ENCODE measurements at regions of chr16 and their contacts with region 1.

Region 1: DNA sequence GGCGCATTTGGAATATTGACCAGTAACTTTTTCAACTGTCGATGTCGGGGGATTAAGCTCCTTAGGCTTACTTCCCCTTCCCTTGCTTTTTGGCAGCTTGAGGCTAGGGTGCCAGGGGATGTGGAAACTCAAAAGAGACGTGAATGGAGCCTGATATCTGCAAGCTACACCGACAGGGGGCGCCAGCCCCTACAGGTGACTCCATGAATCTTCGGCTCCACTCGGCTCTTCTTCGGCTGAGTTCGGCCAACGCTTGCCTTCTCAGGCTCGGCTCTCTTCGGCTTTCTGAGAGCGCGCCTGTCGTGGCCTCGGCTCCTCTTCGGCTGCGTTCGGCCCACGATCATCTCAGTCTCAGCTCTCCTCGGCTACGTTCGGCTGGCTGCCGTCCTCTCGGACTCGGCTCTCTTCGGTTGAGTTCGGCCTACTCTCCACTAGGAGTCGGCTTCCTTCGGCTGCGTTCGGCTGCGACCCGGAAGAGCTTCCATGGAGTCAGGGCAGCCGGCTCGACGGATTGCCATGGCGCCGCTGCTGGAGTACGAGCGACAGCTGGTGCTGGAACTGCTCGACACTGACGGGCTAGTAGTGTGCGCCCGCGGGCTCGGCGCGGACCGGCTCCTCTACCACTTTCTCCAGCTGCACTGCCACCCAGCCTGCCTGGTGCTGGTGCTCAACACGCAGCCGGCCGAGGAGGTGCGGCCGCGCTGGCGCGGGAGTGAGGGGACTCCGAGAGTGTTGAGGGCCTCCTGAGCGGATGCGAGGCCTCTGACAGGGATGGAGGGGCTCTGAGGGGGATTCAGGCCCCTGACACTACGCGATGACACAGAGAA is at the start of gene ERCC4:
- DNase-seq: peak; percentile 100
- ATAC-seq: peak; percentile 96
- H3K4me3 ChIP-seq: peak within 1 kb of the TSS; percentile 64 to 89 (median 79)
- H3K4me3 Mint-ChIP-seq: peak within 1 kb of the TSS; percentile 94
- H3K27ac ChIP-seq: peak within 1 kb of the TSS; percentile 12 to 85
- H3K27ac Mint-ChIP-seq: peak within 1 kb of the TSS; percentile 79
- H3K4me1 ChIP-seq: peaks cover 12 to 15% of the 10 kb centered on the region in 2 donors
- H3K4me1 Mint-ChIP-seq: peaks cover 24% of the 10 kb centered on the region
- H3K27me3 ChIP-seq: no peaks in the 10 kb centered on the region
- H3K27me3 Mint-ChIP-seq: no peaks in the 10 kb centered on the region
- CTCF ChIP-seq: peak; percentile 91
- total RNA-seq, gene ERCC4: 11.9 and 13.2 TPM in 2 replicates

Region 2: DNA sequence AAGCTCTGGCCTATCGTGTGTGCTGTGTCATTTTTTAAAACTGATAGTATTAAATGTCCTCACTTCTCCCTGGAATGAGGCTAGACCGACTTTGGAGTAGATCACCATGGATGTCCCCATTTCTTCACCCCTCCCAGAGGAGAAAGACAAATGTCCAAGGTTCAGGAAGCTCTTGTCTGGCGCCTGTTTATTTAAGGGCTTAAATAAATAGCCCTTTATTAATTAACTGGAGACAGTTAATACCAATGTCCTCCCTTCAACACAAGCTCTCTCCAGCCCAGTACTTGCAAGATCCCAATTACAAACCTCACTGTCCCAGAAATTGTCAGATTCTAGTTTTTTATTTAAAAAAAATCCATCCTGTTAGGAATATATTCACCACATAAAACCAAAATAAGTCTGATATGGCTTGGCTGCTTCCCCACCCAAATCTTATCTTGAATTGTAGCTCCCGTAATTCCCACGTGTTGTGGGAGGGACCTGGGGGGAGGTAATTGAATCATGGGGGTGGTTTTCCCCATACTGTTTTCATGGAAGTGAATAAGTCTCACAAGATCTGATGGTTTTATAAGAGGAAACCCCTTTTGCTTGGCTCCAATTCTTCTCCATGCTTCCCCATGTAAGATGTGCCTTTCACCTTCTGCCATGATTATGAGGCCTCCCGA is 674.1 kb before region 1 on chr16:
- CTCF ChIA-PET with region 1: no interaction called
- POLR2A ChIA-PET with region 1: no interaction called
- intact Hi-C with region 1: no loop called
- DNase-seq: no peak
- ATAC-seq: no peak
- H3K4me3 ChIP-seq: no peak overlapping the region
- H3K4me3 Mint-ChIP-seq: no peak overlapping the region
- H3K27ac ChIP-seq: no peak overlapping the region
- H3K27ac Mint-ChIP-seq: no peak overlapping the region
- H3K4me1 ChIP-seq: no peaks in the 10 kb centered on the region
- H3K4me1 Mint-ChIP-seq: no peaks in the 10 kb centered on the region
- H3K27me3 ChIP-seq: no peaks in the 10 kb centered on the region
- H3K27me3 Mint-ChIP-seq: no peaks in the 10 kb centered on the region
- CTCF ChIP-seq: no peak

Region 3: DNA sequence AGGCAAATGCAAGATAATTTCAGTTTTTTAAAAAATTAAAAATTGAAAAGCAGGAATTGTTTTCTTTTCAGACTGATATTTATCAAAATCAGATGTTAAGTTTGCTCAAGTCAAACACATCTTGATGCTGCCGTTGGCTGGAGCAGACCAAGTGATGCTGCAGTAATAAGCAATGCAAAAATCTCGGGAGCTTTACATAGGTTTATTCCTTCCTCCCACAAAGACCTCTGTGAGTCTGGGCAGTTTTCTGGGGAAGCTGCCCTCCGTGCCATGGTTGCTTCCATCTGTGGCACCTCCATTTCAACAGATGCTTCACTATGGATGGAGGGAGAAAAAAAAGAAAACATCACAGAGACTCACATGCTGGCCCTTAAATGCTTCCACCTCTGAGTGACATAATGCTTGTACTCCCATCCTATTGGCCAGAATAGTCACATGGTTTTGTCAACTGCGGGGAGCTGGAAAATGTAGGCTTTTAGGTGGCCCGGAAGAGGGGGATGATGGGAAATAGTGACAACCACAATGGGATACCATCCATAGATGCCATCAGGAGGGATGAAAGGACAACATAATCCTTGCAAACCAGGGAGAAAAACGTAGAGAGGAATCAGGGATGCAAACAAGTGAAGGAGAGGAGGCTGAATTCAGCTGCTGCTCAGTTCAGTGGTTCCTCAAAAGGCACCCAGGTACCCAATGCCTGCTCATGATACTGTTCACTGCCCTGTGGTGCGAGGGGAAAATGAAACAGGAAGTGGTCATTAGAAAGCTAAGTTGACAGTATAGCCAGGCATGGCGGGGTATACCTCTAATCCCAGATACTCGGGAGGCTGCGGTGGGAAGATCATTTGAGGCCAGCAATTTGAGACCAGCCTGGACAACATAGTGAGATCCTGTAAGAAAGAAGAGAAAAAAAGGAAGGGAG is 13.5 kb before region 1 on chr16:
- CTCF ChIA-PET with region 1: interaction called, 15 read pairs
- POLR2A ChIA-PET with region 1: no interaction called
- intact Hi-C with region 1: no loop called
- DNase-seq: peak; percentile 54
- ATAC-seq: peak; percentile 75
- H3K4me3 ChIP-seq: peak overlapping the region in 2 of 5 experiments; percentile 5 to 41
- H3K4me3 Mint-ChIP-seq: peak overlapping the region; percentile 40
- H3K27ac ChIP-seq: no peak overlapping the region
- H3K27ac Mint-ChIP-seq: peak overlapping the region; percentile 8
- H3K4me1 ChIP-seq: peaks cover 6 to 11% of the 10 kb centered on the region in 2 donors
- H3K4me1 Mint-ChIP-seq: peaks cover 7% of the 10 kb centered on the region
- H3K27me3 ChIP-seq: peaks cover 0 to 7% (median 4%) of the 10 kb centered on the region in 4 experiments
- H3K27me3 Mint-ChIP-seq: peaks cover 41% of the 10 kb centered on the region
- CTCF ChIP-seq: no peak

Region 4: DNA sequence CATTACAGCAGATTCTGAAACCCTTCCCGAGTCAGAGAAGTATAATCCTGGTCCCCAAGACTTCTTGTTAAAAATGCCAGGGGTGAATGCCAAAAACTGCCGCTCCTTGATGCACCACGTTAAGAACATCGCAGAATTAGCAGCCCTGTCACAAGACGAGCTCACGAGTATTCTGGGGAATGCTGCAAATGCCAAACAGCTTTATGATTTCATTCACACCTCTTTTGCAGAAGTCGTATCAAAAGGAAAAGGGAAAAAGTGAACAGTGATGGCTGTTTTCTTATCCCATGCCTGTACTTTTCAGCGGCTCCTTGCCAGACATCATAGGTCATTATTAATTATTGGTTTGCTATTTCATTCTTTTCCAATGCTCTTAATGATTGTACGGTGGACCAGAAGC is 28.2 kb after region 1 on chr16:
- CTCF ChIA-PET with region 1: no interaction called
- POLR2A ChIA-PET with region 1: no interaction called
- intact Hi-C with region 1: no loop called
- DNase-seq: no peak
- ATAC-seq: no peak
- H3K4me3 ChIP-seq: no peak overlapping the region
- H3K4me3 Mint-ChIP-seq: no peak overlapping the region
- H3K27ac ChIP-seq: no peak overlapping the region
- H3K27ac Mint-ChIP-seq: no peak overlapping the region
- H3K4me1 ChIP-seq: no peaks in the 10 kb centered on the region
- H3K4me1 Mint-ChIP-seq: no peaks in the 10 kb centered on the region
- H3K27me3 ChIP-seq: no peaks in the 10 kb centered on the region
- H3K27me3 Mint-ChIP-seq: no peaks in the 10 kb centered on the region
- CTCF ChIP-seq: no peak

Region 5: DNA sequence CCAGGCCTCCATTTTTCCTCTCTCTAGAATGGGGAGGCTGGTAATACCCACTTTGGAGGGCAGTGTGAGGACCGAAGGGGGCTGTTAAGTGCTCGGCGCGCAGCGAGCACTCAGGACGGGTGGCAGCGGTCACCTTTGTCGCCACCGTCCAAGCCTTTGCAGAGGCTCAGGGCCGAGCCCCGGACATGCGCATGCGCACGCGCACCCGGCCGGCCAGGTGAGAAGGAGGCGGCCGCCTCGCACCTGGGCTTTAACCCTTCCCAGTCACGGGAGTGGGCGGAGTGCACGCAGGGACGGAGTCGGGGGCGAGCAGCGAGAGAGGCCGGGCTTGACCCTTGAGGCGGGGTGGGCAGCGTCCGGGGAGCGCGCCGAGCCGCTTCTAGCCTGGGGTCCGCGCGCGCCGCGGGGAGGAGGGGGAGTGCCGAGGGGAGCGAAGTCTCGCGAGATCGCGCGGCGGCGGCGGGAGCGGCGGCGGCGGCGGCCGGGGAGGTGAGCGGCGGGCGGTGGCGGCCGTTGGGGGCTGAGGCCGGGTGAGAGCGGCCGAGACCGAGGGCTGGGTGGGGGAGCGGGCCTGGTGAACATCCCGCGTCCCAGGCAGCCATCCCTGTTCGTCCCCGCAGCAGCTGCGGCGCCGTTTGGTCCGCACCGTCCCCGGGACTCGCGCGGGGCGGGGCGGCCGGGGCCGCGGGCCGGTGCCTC is 151.1 kb after region 1 on chr16 and contains the start of gene MRTFB:
- CTCF ChIA-PET with region 1: interaction called, 6 read pairs
- POLR2A ChIA-PET with region 1: no interaction called
- intact Hi-C with region 1: loop called (anchors 1 kb)
- DNase-seq: peak; percentile 92
- ATAC-seq: peak; percentile 87
- H3K4me3 ChIP-seq: peak within 1 kb of the TSS; percentile 6 to 76 (median 67)
- H3K4me3 Mint-ChIP-seq: peak within 1 kb of the TSS; percentile 94
- H3K27ac ChIP-seq: peak within 1 kb of the TSS in 1 of 2 donors; percentile 74
- H3K27ac Mint-ChIP-seq: peak within 1 kb of the TSS; percentile 88
- H3K4me1 ChIP-seq: peaks cover 11 to 12% of the 10 kb centered on the region in 2 donors
- H3K4me1 Mint-ChIP-seq: peaks cover 12% of the 10 kb centered on the region
- H3K27me3 ChIP-seq: peaks cover 0 to 7% (median 0%) of the 10 kb centered on the region in 4 experiments
- H3K27me3 Mint-ChIP-seq: peaks cover 7% of the 10 kb centered on the region
- CTCF ChIP-seq: no peak
- total RNA-seq, gene MRTFB: 29.4 and 39.5 TPM in 2 replicates

Region 6: GRCh38 chr16:14354551-14355351 is 434.9 kb after region 1 on chr16:
- CTCF ChIA-PET with region 1: no interaction called
- POLR2A ChIA-PET with region 1: no interaction called
- intact Hi-C with region 1: no loop called
- DNase-seq: peak; percentile 91
- ATAC-seq: peak; percentile 94
- H3K4me3 ChIP-seq: peak overlapping the region in 3 of 5 experiments; percentile 16 to 59 (median 48)
- H3K4me3 Mint-ChIP-seq: peak overlapping the region; percentile 30
- H3K27ac ChIP-seq: peak overlapping the region; percentile 39 to 61
- H3K27ac Mint-ChIP-seq: peak overlapping the region; percentile 43
- H3K4me1 ChIP-seq: peaks cover 8 to 25% of the 10 kb centered on the region in 2 donors
- H3K4me1 Mint-ChIP-seq: peaks cover 29% of the 10 kb centered on the region
- H3K27me3 ChIP-seq: no peaks in the 10 kb centered on the region
- H3K27me3 Mint-ChIP-seq: no peaks in the 10 kb centered on the region
- CTCF ChIP-seq: no peak

Region 7: DNA sequence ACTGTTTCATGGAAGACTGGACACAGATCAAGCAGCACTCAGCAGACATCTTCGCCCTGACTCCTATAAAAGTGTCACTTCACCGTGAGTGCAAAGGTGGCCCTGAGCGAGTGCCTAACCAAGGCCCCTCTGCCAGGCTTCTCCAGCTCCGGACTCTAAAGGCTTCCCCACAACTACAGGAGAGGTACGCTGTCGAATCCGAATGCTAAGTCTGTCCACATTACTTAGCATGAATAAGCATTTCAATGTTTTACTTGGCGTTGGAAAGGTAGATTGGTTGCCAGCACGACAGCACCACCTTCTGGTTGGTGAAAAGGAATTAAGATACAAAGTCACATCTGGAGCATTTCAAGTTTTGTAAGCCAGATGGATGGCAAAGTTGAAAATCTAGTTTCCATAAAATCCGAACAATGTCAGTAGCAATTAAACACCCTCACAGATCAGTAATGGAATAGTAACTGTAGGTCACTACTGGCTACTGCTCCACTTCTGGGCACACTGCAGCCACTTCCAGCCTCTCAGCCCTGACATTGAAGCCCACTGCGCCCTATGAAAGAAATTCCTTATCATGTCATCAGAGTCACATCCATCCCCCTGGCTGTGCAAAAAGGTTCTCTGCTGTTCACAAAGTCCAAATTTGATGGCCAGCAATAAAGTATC is 609.2 kb after region 1 on chr16:
- CTCF ChIA-PET with region 1: interaction called, 19 read pairs
- POLR2A ChIA-PET with region 1: interaction called, 3 read pairs
- intact Hi-C with region 1: loop called (anchors 1 kb)
- DNase-seq: peak; percentile 66
- ATAC-seq: no peak
- H3K4me3 ChIP-seq: no peak overlapping the region
- H3K4me3 Mint-ChIP-seq: no peak overlapping the region
- H3K27ac ChIP-seq: no peak overlapping the region
- H3K27ac Mint-ChIP-seq: peak overlapping the region; percentile 12
- H3K4me1 ChIP-seq: peaks cover 0 to 2% of the 10 kb centered on the region in 2 donors
- H3K4me1 Mint-ChIP-seq: peaks cover 6% of the 10 kb centered on the region
- H3K27me3 ChIP-seq: no peaks in the 10 kb centered on the region
- H3K27me3 Mint-ChIP-seq: no peaks in the 10 kb centered on the region
- CTCF ChIP-seq: peak; percentile 81

Measured in B cell (primary cell).